PC-9 (cell line): ENCODE measurements at regions of chr2 and their contacts with region 1.

Region 1: DNA sequence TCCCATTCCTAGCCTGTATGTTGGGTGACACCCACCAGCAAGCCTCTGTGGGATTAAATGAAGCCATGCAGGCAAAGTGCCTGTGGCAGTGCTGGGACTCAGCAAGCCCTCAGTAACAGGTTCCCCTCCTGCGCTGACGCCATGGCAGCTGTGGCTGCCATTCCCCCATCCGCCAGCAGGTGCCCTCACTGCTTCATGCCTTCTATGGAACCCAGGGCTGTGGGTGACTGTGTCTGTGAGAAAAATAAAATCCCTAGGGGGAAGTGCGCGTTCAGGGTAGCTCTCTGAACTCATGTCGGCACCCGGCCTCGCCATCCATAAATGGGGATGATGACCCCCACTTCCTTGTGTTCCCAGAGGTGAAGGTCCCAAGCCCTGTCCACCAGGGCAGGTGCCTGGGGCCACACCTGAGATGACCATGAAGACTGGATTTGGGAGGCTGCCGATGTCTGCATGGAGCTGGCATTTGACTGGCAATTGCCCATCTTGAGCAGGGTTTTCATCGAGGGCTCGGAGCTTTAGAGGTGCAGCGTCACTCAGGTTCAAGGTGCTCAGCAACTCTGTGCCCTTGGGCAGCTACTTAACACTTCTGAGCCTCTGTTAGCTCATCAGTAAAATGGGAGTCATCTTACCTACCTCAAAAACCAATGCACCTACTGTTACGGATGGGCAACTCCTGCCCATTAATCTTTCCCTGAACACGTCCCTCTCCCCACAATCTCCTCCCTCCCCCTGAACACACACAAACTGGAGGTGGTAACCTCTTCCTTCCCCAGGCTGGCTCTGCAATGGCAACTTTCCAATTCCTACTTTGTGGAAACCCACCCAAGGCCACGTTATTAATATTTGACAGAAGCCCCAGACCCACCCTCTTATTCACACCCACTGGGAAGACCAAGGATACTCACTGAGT is 2.9 kb upstream of the MAL start:
- DNase-seq: peak; percentile 65 to 82
- H3K4me3 ChIP-seq: no peak overlapping the region
- H3K27ac ChIP-seq: no peak overlapping the region
- H3K4me1 ChIP-seq: peaks cover 73% of the 10 kb centered on the region
- H3K27me3 ChIP-seq: no peaks in the 10 kb centered on the region
- CTCF ChIP-seq: peak; percentile 99

Region 2: GRCh38 chr2:94759204-94759603 is 263.4 kb before region 1 on chr2:
- CTCF ChIA-PET with region 1: no interaction called
- POLR2A ChIA-PET with region 1: no interaction called
- intact Hi-C with region 1: no loop called
- DNase-seq: peak; percentile 46 to 50
- H3K4me3 ChIP-seq: no peak overlapping the region
- H3K27ac ChIP-seq: no peak overlapping the region
- H3K4me1 ChIP-seq: no peaks in the 10 kb centered on the region
- H3K27me3 ChIP-seq: peaks cover 30% of the 10 kb centered on the region
- CTCF ChIP-seq: no peak

Region 3: DNA sequence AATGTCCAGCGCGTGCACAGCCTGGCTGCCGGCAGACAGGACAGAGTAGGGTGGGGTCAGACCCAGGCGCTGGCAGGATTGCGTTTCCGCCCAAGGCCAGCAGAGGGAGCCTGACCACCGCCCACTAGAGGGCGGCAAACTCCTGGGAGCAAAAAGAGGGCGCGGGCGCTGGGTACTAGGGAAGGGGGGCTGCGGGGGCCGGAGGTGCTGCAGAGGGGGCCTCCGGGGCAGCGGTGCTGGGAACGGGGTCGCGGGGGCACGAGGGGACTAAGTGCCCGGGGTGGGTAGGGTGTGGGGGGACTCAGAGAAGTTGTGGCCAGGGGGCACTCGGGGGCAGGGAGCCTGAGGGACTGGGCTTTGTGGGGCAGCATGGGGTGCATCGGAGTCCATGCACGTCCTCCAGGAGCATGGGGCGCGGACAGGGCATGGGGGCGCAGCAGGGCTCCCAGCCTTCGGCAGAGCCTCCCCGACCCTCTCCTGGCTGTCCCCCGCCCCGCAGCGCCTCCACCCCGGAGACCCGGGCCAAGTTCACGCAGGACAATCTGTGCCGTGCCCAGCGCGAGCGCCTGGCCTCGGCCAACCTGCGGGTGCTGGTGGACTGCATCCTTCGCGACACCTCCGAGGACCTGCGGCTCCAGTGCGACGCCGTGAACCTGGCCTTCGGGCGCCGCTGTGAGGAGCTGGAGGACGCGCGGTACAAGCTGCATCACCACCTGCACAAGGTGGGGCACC is 148.1 kb before region 1 on chr2:
- CTCF ChIA-PET with region 1: no interaction called
- POLR2A ChIA-PET with region 1: no interaction called
- intact Hi-C with region 1: loop called (anchors 1 kb)
- DNase-seq: peak in 1 of 2 experiments; percentile 83
- H3K4me3 ChIP-seq: no peak overlapping the region
- H3K27ac ChIP-seq: no peak overlapping the region
- H3K4me1 ChIP-seq: peaks cover 6% of the 10 kb centered on the region; the same call in 1 of the 2 replicates
- H3K27me3 ChIP-seq: no peaks in the 10 kb centered on the region
- CTCF ChIP-seq: peak; percentile 98

Region 4: DNA sequence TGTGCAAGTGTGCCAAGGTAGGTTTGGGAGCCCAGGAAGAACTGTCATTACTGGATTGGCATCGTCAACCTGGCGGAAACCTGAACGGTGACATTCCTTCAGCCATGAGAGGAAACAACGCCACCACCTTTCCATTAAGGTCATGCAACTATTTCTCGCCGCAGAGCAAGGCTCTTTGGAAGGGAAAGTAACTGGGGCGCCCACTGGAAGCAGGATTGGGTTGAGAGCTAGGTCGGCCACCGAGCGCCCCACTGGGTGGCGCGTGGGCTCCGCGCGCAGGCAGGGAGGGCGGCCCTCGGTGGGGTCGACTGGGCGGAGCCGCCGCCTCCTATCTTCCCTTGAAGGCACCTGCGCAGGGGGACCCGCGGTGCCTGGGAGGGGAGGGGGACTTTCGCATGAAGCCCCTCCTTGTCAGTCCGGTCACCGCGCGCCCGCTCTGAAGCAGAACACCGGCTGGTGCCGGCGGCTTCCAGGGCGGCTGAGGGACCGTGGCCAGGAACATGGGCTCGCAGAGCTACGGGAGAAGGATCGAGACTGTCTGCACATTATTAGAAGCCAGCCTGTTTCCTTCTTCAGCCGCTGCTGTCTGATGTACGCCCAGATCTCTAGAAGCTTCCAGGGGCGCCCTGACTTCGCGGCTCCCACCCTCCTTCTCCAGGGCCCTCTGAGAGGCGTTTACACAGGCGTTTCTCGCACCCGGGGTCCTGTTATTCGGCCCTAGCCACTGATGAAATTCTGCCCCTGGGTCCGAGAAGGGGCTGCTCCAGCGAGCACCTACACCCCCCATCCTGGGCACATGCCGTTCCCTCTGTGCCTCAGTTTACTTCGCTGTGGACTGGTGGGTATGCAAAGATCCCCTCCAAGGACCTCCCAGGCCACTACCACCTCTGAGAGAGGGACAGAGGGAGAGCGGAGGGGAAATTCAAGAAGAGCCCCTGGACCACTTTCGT is 24.3 kb before region 1 on chr2:
- CTCF ChIA-PET with region 1: interaction called, 3 read pairs
- POLR2A ChIA-PET with region 1: no interaction called
- intact Hi-C with region 1: loop called (anchors 1 kb)
- DNase-seq: peak; percentile 64 to 75
- H3K4me3 ChIP-seq: peak overlapping the region; percentile 44; the same call in 1 of the 2 replicates
- H3K27ac ChIP-seq: no peak overlapping the region
- H3K4me1 ChIP-seq: no peaks in the 10 kb centered on the region
- H3K27me3 ChIP-seq: peaks cover 16% of the 10 kb centered on the region; the same call in 1 of the 2 replicates
- CTCF ChIP-seq: no peak

Region 5: DNA sequence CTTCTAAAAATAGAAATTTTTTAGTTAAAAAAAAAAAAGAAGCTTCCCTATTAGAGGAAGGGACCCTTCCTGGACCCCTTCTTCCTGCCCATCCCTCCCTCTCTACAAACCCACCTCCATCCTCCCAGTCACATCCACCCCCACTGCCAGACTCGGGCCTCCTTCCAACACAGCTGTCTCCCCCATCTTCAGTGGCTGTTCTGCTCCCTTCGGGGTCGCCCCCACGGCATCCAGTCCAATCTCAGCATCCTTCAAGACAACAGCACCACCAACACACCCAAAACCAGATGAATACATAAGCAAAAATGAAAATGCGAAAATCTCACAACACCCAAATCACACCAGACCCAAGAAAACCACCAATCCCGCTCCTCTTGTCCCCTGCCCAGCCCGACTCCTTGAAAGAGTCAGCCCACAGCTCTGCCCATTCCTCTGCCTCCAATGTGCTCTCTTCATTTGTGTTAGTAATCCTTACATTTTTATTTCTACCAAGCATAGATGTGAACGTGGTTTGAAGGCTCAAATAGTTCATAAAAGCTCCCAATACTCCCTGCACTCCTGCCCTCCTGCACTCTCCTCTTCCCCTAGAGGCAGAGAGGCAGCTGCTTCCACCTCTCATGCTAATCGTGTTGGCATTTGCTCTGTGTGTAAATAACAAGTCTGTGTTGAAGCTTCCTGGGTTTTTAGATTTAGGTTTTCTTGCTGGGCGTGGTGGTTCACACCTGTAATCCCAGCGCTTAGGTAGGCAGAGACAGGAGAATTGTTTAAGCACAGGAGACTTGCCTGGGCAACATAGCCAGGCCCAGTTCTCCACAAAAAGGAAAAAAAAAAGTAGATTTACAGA is 39.9 kb after region 1 on chr2:
- CTCF ChIA-PET with region 1: interaction called, 3 read pairs
- POLR2A ChIA-PET with region 1: interaction called, 4 read pairs
- intact Hi-C with region 1: loop called (anchors 1 kb)
- DNase-seq: peak; percentile 36 to 83
- H3K4me3 ChIP-seq: no peak overlapping the region
- H3K27ac ChIP-seq: peak overlapping the region; percentile 92
- H3K4me1 ChIP-seq: peaks cover 72% of the 10 kb centered on the region
- H3K27me3 ChIP-seq: no peaks in the 10 kb centered on the region
- CTCF ChIP-seq: no peak

Region 6: GRCh38 chr2:95115418-95115817 is 92.9 kb after region 1 on chr2:
- CTCF ChIA-PET with region 1: interaction called, 10 read pairs
- POLR2A ChIA-PET with region 1: no interaction called
- intact Hi-C with region 1: loop called (anchors 1 kb)
- DNase-seq: peak; percentile 69 to 77
- H3K4me3 ChIP-seq: no peak overlapping the region
- H3K27ac ChIP-seq: no peak overlapping the region
- H3K4me1 ChIP-seq: peaks cover 10% of the 10 kb centered on the region; the same call in 1 of the 2 replicates
- H3K27me3 ChIP-seq: no peaks in the 10 kb centered on the region
- CTCF ChIP-seq: peak; percentile 94